Caco-2 (cell line): ENCODE measurements at regions of chr17 and their contacts with region 1.

Region 1: DNA sequence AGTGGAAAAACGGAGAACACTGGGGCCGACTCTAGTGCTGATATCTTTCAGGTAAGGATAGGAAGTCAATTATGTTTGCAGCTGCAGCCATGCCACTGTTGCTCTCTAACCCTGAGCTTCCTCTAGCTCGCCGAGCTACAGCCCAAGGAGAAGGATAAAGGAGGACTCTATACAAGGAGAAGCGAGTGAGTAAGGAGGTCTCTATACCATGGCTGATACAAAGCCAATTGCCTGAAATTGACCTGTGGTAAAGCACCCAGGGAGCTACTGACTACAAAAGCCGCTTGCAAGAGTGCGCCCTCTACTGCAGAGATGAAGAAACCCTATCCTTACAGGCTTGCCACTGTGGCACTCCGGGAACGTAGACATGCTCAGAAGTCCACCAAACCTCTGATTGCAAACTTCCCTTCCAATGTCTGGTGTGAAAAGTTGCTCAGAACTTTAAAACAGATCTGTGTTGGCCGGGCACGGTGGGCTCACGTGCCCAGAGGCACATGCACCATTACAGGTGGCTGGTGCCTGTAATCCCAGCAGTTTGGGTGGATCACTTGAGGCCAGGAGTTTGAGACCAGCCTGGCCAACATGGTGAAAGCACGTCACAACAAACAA is 10.8 kb upstream of the SLC46A1 start:
- DNase-seq: peak; percentile 87 to 89
- H3K4me3 ChIP-seq: no peak overlapping the region
- H3K4me3 Mint-ChIP-seq: no peak overlapping the region
- H3K27ac Mint-ChIP-seq: peak overlapping the region; percentile 48
- H3K4me1 ChIP-seq: peaks cover 17% of the 10 kb centered on the region
- H3K4me1 Mint-ChIP-seq: peaks cover 17% of the 10 kb centered on the region
- H3K27me3 ChIP-seq: no peaks in the 10 kb centered on the region
- H3K27me3 Mint-ChIP-seq: no peaks in the 10 kb centered on the region
- CTCF ChIP-seq: peak; percentile 92 to 99

Region 2: GRCh38 chr17:28371245-28372202 is 45.3 kb before region 1 on chr17 and contains the start of gene SARM1:
- CTCF ChIA-PET with region 1: interaction called, 35 read pairs
- POLR2A ChIA-PET with region 1: no interaction called
- intact Hi-C with region 1: loop called (anchors 1 kb)
- DNase-seq: peak; percentile 99 to 100
- H3K4me3 ChIP-seq: peak within 1 kb of the TSS; percentile 40
- H3K4me3 Mint-ChIP-seq: peak within 1 kb of the TSS; percentile 75
- H3K27ac Mint-ChIP-seq: peak within 1 kb of the TSS; percentile 88
- H3K4me1 ChIP-seq: peaks cover 46% of the 10 kb centered on the region
- H3K4me1 Mint-ChIP-seq: peaks cover 54% of the 10 kb centered on the region
- H3K27me3 ChIP-seq: no peaks in the 10 kb centered on the region
- H3K27me3 Mint-ChIP-seq: no peaks in the 10 kb centered on the region
- CTCF ChIP-seq: no peak
- total RNA-seq, gene SARM1: 32.8 and 34.4 TPM in 2 replicates

Region 3: DNA sequence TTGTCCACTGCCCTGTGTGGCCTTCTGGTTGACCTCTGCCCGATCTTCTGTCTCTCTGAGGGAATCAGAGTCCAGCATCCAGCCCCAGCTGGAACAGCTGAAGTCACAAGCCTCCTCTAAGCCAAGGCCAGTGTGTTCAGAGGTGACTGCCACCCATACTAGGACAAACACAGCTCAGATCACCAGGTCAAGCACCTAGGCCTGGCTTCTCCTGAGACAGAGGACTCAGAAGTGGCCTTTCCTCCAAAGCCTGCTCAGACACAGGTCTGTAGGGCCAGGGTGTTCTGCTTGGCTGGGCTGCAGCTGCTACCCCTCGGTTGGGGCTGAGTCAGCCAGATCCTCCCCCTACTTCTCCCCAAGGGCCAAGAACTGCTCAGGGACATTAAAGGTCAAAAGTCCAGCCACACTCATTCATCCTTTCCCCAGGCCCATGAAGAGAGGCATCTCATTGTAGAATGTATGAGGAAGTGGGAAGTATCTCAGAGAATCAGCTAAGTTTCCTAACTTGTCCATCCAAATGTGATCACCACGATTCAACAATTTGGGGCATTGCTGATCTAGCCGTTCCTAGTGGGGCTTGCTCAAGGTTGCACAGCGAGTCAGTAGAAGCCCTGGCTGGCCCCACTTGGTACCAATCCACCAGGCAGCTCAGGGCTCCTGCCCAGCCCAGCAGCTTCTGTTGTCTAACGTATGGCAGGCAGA is 18.4 kb before region 1 on chr17:
- CTCF ChIA-PET with region 1: interaction called, 7 read pairs
- POLR2A ChIA-PET with region 1: no interaction called
- intact Hi-C with region 1: loop called (anchors 2 kb)
- DNase-seq: peak; percentile 62 to 86
- H3K4me3 ChIP-seq: no peak overlapping the region
- H3K4me3 Mint-ChIP-seq: peak overlapping the region; percentile 9
- H3K27ac Mint-ChIP-seq: peak overlapping the region; percentile 30
- H3K4me1 ChIP-seq: peaks cover 63% of the 10 kb centered on the region
- H3K4me1 Mint-ChIP-seq: peaks cover 42% of the 10 kb centered on the region
- H3K27me3 ChIP-seq: no peaks in the 10 kb centered on the region
- H3K27me3 Mint-ChIP-seq: no peaks in the 10 kb centered on the region
- CTCF ChIP-seq: no peak

Region 4: DNA sequence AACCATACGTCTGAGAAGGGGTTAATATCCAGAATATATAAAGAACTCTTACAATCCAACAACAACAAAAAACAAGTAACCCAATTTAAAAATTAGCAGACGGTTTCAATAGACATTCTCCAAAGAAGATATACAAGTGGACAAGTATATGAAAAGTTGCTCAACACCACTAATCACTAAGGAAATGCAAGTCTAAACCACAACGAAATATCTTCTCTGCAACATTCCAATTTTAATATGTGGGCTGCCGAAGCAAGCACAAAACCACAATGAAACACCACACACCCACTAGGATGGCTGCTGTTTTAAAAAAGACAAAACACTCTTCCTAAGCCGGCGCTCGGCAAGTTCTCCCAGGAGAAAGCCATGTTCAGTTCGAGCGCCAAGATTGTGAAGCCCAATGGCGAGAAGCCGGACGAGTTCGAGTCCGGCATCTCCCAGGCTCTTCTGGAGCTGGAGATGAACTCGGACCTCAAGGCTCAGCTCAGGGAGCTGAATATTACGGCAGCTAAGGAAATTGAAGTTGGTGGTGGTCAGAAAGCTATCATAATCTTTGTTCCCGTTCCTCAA is 50.7 kb after region 1 on chr17:
- CTCF ChIA-PET with region 1: interaction called, 11 read pairs
- POLR2A ChIA-PET with region 1: no interaction called
- intact Hi-C with region 1: no loop called
- DNase-seq: peak in 1 of 2 experiments; percentile 9
- H3K4me3 ChIP-seq: no peak overlapping the region
- H3K4me3 Mint-ChIP-seq: no peak overlapping the region
- H3K27ac Mint-ChIP-seq: no peak overlapping the region
- H3K4me1 ChIP-seq: peaks cover 53% of the 10 kb centered on the region
- H3K4me1 Mint-ChIP-seq: peaks cover 50% of the 10 kb centered on the region
- H3K27me3 ChIP-seq: no peaks in the 10 kb centered on the region
- H3K27me3 Mint-ChIP-seq: no peaks in the 10 kb centered on the region
- CTCF ChIP-seq: no peak